ENCODE measurements at regions of chr10 and their contacts with region 1.

Region 1: DNA sequence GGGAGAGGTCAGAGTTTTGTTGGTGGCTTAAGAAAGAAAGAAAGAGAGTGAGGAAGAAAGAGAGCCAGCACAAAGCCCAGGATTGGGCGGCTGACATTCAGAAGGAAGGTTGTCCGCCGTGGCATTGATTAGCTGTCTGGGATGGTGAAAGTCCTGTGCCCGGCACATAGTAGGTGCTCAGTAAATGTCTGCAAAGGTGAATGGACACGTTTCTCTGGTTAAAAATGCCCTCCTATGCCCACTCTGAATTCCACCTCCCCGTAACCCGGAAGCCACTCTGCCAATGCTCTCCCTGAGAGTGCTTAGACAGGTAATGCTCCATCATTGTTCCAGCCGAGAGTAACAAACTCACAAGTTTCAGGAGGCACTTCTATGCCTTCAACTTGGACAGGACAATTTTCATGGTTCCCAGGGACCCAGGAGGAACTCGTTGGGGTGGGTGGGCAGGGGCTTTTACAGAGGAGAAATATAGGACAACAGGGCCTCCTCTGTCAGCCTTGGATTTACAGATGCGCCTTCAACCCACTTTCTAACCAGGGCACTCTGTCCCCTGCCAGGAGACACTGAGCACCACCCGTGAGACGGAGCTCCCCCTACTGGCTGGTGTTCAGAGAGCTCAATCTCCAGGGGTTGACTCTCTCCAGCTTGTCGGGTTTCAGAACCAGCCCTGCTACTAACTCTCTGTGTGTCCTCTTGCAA is 411.5 kb upstream of the ZMIZ1 start:
- DNase-seq: peak; percentile 45
- H3K4me3 Mint-ChIP-seq: no peak overlapping the region
- H3K27ac Mint-ChIP-seq: no peak overlapping the region
- H3K4me1 Mint-ChIP-seq: no peaks in the 10 kb centered on the region
- H3K27me3 Mint-ChIP-seq: peaks cover 4% of the 10 kb centered on the region

Region 2: DNA sequence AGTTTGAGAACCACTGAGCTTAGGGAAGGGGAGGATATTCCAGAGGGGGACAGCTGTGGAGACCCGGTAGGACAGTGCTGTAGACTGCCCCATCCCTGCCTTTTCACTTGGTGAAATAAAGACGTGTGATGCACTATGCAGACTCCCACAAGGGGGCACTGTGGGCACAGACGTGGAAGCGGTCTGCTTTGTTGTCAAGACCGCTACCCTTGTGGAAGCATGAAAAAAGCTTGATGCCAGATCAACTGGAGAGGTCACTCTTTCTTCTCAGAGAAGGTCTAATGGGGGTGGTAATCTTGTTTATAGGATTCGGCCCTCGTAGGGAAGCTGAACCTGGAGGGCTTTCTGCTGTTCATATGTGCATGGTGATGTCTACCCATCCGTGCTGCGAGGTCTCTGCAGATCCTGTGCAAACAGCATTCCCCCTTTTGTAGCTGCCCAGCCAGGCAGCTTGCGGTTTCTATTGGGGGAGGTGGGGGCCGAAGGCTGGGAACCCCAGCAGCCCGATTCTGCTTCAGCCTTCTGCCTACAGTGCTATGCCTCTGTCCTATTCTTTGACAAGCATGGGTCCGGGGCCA is 609.9 kb before region 1 on chr10:
- intact Hi-C with region 1: loop called (anchors 1 kb)
- DNase-seq: peak; percentile 61
- H3K4me3 Mint-ChIP-seq: no peak overlapping the region
- H3K27ac Mint-ChIP-seq: no peak overlapping the region
- H3K4me1 Mint-ChIP-seq: peaks cover 30% of the 10 kb centered on the region
- H3K27me3 Mint-ChIP-seq: no peaks in the 10 kb centered on the region

Region 3: DNA sequence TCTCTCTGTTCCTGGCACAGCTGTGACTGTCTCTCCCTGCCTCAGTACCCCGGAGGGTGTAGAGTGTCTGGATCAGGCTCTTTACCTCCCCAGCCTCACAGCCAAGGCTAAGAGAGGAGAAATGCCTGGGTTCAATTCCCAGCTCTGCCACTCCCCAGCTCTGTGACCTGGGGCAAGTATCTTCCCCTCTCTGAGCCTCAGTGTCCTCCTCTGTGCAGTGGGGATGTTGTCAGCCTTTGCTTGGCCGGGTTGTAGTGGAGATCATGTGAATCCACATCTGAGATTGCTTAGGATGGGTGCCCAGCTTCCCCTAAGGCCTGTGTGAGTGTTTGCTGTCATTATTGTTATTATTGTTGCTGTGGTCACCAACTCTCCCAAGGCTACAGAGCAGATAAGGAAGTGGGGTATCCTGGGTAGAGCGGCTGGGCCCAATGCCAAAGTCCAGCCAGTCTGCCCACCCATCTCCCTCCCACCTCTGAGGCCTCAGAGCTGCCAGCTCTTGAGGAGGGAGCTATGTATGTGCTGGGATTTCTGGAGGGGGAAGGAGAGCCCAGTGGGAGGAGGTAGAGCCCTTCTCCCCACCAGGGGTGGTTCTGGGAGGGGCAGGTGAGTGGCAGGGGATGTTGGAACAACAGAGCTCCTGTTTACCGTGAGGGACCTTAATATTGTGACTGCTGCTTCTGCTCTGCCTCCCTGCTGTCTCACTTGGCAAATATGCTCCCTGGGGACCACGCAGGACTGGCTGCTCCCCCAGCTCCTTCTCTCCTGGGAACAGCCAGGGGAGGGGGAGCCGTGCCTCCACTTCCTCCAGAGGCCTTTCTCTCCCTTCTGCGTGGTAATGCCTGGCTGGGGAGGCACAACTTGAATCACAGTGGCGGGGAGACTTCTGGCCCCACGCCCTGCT is 453.1 kb before region 1 on chr10:
- intact Hi-C with region 1: loop called (anchors 10 kb)
- DNase-seq: no peak
- H3K4me3 Mint-ChIP-seq: no peak overlapping the region
- H3K27ac Mint-ChIP-seq: no peak overlapping the region
- H3K4me1 Mint-ChIP-seq: no peaks in the 10 kb centered on the region
- H3K27me3 Mint-ChIP-seq: peaks cover 2% of the 10 kb centered on the region

Region 4: DNA sequence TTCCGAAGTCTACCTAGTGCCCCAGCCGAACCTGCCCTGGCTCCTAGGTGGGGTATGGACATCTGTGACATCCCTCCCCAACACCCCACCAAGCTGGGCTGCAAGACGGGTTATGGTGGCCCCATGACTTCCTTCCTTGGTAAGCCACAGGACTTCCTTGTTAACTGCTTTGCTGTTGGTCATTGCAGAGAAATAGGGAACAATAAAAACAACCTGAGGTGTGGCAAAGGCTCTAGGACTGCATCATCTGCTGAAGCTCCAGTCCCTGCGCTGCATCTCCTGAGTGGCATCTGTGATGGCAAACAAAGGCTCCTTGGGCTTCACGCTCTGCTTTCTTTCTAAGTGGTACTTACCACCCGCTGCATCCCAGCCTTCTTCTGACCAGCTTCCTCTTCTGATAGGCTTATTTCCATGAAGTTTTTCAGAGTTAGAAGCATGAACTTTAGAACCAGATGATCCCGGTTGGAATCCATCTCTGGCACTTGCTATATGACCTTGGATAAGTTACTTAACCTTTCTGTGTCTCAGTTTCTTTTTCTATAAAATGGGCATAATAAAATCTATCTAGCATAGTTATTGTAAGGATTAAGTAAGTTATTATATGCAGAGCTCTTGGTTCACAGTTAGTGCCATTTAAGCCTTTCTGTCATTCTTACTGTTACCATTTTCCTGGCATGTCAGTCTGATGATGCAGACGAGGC is 406.8 kb before region 1 on chr10:
- intact Hi-C with region 1: loop called (anchors 2 kb)
- DNase-seq: no peak
- H3K4me3 Mint-ChIP-seq: no peak overlapping the region
- H3K27ac Mint-ChIP-seq: no peak overlapping the region
- H3K4me1 Mint-ChIP-seq: peaks cover 29% of the 10 kb centered on the region
- H3K27me3 Mint-ChIP-seq: peaks cover 3% of the 10 kb centered on the region

Region 5: DNA sequence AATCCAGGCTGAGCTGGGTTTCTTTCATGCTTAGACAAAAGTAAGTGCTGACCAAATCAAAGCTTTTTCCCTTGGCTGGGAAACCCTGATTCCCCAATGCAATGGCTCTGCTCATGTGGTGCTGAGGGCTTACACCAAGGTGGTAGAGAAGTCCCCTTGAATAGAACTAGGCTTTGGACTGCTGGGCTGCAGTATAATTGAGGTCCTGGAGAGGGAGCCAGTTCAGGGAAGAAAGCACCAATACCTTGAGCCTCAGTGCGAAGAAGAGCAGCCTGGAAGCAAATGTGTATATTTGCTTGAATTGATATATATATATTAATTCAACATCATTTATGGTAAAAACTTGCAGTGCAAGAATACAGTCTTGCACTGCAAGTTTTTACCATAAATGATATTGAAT is 232.6 kb before region 1 on chr10:
- intact Hi-C with region 1: loop called (anchors 2 kb)
- DNase-seq: no peak
- H3K4me3 Mint-ChIP-seq: no peak overlapping the region
- H3K27ac Mint-ChIP-seq: no peak overlapping the region
- H3K4me1 Mint-ChIP-seq: no peaks in the 10 kb centered on the region
- H3K27me3 Mint-ChIP-seq: peaks cover 20% of the 10 kb centered on the region

Measured in activated T-helper 1 cell treated with anti-CD3 and anti-CD28 coated beads, Interleukin-12 subunit alpha, Interleukin-12 subunit beta, Interleukin-2, Interleukin-4 antibody, amounts not matched to agents 30 ng/mL and 10 ng/mL and 1 ng/mL, durations not matched to agents 14 hours and 24 hours and 36 hours (primary cell).